Heart right ventricle (tissue), 16 donors: ENCODE measurements at regions of chr6 and their contacts with region 1.

Region 1: DNA sequence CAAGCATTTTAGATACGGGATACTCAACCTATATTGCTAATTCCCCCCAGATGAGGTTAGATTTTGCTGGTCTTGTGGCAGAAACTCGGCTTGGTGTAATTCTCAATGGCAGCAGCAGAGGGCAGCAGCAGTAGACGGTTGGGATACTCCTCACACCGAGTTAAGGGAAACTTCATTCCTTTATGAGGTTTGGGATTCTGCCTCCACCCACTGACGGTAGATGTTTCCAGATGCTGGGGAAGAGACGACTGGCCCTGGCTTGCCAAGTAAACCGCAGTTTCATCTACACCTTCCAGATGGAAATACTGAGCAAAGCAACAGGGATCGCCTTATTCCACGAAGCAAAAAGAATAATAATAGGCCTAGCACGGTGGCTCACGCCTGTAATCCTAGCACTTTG is 8.2 kb upstream of the TBC1D7 start:
- DNase-seq: peak; percentile 82 to 84
- ATAC-seq: peak; percentile 66 to 85 (median 72)
- H3K4me3 ChIP-seq: no peak overlapping the region
- H3K27ac ChIP-seq: peak overlapping the region in 1 of 10 donors; percentile 40
- H3K4me1 ChIP-seq: peaks cover 0 to 29% (median 8%) of the 10 kb centered on the region in 9 donors
- H3K27me3 ChIP-seq: no peaks in the 10 kb centered on the region
- CTCF ChIP-seq: peak; percentile 70 to 95 (median 90)

Region 2: GRCh38 chr6:13194852-13195251 is 141.7 kb before region 1 on chr6:
- intact Hi-C with region 1: loop called in 1 of 10 experiments (anchors 10 kb)
- DNase-seq: peak; percentile 24 to 37
- ATAC-seq: peak in 1 of 8 donors; percentile 62
- H3K4me3 ChIP-seq: no peak overlapping the region
- H3K27ac ChIP-seq: no peak overlapping the region
- H3K4me1 ChIP-seq: peaks cover 0 to 9% (median 0%) of the 10 kb centered on the region in 9 donors
- H3K27me3 ChIP-seq: no peaks in the 10 kb centered on the region
- CTCF ChIP-seq: peak in 8 of 9 donors; percentile 22 to 63 (median 49)

Region 3: GRCh38 chr6:13480631-13481501 is 144.3 kb after region 1 on chr6:
- intact Hi-C with region 1: loop called in 4 of 10 experiments (anchors 2 to 5 kb)
- DNase-seq: no peak
- ATAC-seq: peak in 2 of 8 donors; percentile 9 to 31
- H3K4me3 ChIP-seq: no peak overlapping the region
- H3K27ac ChIP-seq: peak overlapping the region in 6 of 10 donors; percentile 3 to 65 (median 36)
- H3K4me1 ChIP-seq: peaks cover 6 to 87% (median 68%) of the 10 kb centered on the region in 9 donors
- H3K27me3 ChIP-seq: no peaks in the 10 kb centered on the region
- CTCF ChIP-seq: no peak

Region 4: DNA sequence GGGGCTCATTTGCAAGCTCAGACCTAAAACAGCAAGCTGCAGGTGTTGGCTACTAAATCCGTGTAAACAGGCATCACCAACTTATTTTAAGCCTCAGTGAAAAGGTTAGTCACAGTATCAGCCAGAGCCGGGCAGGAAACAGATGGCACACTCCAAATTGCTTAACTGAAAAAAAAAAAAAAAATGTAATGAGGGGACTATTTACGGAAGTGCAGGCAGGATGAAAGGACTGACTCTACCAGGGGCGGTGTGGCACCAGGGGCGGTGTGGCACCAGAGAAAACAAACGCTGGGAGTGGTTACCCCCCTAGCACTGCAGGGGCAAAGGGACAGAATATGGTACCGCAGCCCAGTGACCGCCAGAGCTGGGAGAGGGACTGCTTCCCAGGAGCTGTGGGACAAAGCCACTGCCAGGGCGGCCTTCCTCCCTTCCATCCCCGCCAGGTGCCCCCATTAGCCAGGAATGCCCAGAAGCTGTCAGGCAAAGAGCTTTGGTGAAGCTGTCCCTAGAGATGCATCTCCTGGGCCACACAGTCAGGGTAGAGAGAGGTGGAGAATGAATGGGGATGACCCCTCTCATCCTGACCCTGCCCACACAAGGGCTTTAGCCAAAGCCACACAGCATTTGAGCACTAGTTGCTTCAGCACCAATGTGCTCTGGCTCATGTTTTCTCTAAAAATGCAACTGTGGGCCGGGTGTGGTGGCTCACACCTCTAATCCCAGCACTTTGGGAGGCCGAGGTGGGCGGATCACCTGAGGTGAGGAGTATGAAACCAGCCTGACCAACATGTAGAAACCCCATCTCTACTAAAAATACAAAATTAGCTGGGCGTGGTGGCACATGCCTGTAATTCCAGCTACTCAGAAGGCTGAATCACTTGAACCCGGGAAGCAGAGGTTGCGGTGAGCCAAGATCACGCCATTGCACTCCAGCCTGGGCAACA is 190.4 kb after region 1 on chr6:
- intact Hi-C with region 1: loop called in 2 of 10 experiments (anchors 2 to 10 kb)
- DNase-seq: peak; percentile 31
- ATAC-seq: peak; percentile 44 to 84 (median 72)
- H3K4me3 ChIP-seq: no peak overlapping the region
- H3K27ac ChIP-seq: peak overlapping the region; percentile 56 to 86 (median 80)
- H3K4me1 ChIP-seq: peaks cover 5 to 64% (median 49%) of the 10 kb centered on the region in 9 donors
- H3K27me3 ChIP-seq: no peaks in the 10 kb centered on the region
- CTCF ChIP-seq: no peak

Region 5: GRCh38 chr6:13574149-13574570 is 237.6 kb after region 1 on chr6:
- intact Hi-C with region 1: loop called in 8 of 10 experiments (anchors 2 to 10 kb)
- DNase-seq: peak; percentile 92 to 93
- ATAC-seq: peak; percentile 95 to 97 (median 96)
- H3K4me3 ChIP-seq: peak overlapping the region; percentile 53 to 90 (median 74)
- H3K27ac ChIP-seq: peak overlapping the region; percentile 87 to 100 (median 98)
- H3K4me1 ChIP-seq: peaks cover 4 to 32% (median 21%) of the 10 kb centered on the region in 9 donors
- H3K27me3 ChIP-seq: no peaks in the 10 kb centered on the region
- CTCF ChIP-seq: peak; percentile 30 to 76 (median 49)

Region 6: DNA sequence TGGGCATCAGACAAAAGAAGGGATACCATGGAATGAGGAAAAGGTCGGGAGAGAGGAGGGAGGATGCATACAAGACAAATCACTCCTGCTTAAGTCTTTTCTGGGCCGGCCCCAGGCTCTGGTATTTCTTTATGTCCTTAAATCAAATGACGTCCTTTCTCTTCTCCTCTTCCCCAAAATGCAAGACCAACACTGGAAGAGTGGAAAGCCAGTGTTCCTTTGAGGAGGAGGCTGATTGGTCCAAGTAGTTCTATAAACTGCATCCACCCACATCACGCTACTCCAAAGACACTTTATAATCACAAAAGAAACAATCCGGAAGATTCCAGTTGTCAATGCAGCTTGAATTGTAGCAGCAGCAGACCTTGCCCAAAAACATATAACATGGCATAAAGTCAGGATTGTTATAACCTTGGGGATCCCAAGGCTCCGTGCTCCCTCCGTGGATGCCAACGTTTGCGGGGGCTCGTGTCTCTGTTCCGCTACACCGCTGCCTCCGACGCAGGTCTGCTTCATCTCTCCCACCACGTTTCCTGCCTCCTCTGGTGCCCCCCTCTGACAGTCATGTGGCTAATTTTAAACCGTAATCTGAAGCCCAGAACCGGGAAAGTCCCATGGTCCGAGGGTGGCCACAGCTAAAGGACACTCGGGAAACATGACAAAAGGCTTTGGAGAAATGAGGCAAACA is 430.7 kb after region 1 on chr6:
- intact Hi-C with region 1: loop called in 1 of 10 experiments (anchors 5 kb)
- DNase-seq: peak; percentile 35 to 78
- ATAC-seq: peak; percentile 86 to 96 (median 92)
- H3K4me3 ChIP-seq: peak overlapping the region in 9 of 10 donors; percentile 15 to 53 (median 44)
- H3K27ac ChIP-seq: peak overlapping the region in 7 of 10 donors; percentile 22 to 69 (median 52)
- H3K4me1 ChIP-seq: peaks cover 0 to 39% (median 13%) of the 10 kb centered on the region in 9 donors
- H3K27me3 ChIP-seq: no peaks in the 10 kb centered on the region
- CTCF ChIP-seq: peak in 6 of 9 donors; percentile 26 to 50 (median 35)